A673 (cell line): ENCODE measurements at regions of chr2 and their contacts with region 1.

Region 1: GRCh38 chr2:101219246-101219645 is 33.4 kb upstream of the CNOT11 start:
- DNase-seq: no peak
- H3K4me3 ChIP-seq: no peak overlapping the region
- H3K27ac ChIP-seq: no peak overlapping the region
- H3K4me1 ChIP-seq: no peaks in the 10 kb centered on the region
- H3K27me3 ChIP-seq: no peaks in the 10 kb centered on the region
- CTCF ChIP-seq: no peak

Region 2: DNA sequence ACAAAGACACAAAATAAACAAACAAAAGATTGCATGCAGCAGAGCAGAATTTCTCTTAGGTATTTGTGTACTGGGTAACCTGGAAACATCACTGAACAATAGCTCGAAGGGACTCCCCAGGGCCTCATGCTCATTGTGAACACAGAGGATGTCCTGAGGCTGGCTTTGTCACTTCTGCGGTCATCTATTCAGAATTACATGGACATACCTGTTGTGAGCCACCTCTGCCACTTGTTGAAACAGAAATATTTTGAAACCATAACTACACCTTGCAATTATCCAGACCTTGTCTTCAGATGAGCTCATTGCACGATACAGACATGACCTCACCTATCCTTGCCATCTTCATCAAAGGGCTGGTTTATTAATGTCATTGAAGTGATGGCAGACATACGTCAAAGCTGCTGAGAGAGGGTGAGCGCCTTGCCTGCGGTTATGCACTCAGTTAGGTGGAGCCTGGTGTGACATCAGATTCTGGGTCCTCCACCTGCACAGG is 191.5 kb after region 1 on chr2:
- CTCF ChIA-PET with region 1: no interaction called
- POLR2A ChIA-PET with region 1: interaction called, 15 read pairs
- intact Hi-C with region 1: no loop called
- DNase-seq: no peak
- H3K4me3 ChIP-seq: no peak overlapping the region
- H3K27ac ChIP-seq: no peak overlapping the region
- H3K4me1 ChIP-seq: no peaks in the 10 kb centered on the region
- H3K27me3 ChIP-seq: peaks cover 5% of the 10 kb centered on the region
- CTCF ChIP-seq: no peak